ENCODE measurements at regions of chr1 and their contacts with region 1.

Region 1: DNA sequence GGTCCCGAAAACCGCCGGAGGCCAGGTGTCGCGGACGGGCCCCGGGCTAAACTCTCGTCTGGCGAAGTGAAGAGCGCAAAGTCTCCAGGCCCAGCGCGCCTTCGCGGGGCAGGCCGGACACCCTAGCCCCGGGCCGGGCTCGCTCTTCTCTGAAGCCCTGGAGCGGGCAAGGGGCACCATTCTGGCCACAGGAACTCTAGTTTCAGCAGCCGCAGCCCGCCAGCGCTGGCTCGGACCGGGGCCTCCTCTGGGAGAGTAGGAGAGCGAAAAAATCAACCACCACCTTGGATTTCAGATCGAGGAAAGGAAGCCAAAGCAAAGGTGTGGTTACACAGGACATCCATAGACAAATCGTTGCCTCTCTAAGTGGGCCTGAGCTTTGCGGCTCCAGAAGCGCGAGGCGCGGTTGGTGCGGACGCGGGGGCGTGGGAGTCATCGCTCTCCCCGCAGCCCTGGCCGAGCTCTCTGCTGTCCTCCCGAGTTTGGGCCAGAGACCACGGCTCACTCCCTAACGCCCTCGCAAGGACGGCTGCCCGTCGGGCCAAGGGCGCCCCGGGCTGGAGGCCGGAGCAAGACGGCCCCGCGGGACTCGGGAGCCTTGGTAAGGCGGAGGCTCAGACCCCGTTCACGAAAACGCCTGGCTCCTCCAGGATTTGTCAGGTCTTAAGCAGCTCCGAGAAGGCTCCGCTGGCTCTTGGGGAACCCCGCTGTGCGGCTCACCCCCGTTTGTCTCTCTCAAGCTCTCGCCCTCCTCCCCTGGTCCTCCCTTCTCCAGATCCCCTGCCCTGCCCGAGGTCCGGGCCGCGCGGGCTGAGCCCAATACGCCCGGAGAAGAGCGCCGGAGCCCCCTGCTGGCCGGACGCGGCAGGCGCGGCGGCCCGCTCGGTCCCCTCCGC is 132.9 kb upstream of the DPYD start:
- DNase-seq: peak; percentile 42 to 63 (median 50)
- H3K4me3 ChIP-seq: peak overlapping the region in 1 of 2 donors; percentile 49
- H3K4me3 Mint-ChIP-seq: peak overlapping the region; percentile 54 to 87 (median 72)
- H3K27ac ChIP-seq: no peak overlapping the region
- H3K27ac Mint-ChIP-seq: peak overlapping the region in 1 of 7 donors; percentile 71
- H3K4me1 ChIP-seq: peaks cover 22% of the 10 kb centered on the region
- H3K4me1 Mint-ChIP-seq: peaks cover 11 to 29% (median 22%) of the 10 kb centered on the region in 4 donors
- H3K27me3 ChIP-seq: peaks cover 40% of the 10 kb centered on the region
- H3K27me3 Mint-ChIP-seq: peaks cover 45 to 58% of the 10 kb centered on the region in 2 donors

Region 2: GRCh38 chr1:96236156-96236739 is 1817.5 kb before region 1 on chr1:
- CTCF ChIA-PET with region 1: no interaction called
- POLR2A ChIA-PET with region 1: no interaction called
- intact Hi-C with region 1: loop called (anchors 5 kb)
- DNase-seq: peak in 1 of 5 donors; percentile 1
- H3K4me3 ChIP-seq: no peak overlapping the region
- H3K4me3 Mint-ChIP-seq: no peak overlapping the region
- H3K27ac ChIP-seq: no peak overlapping the region
- H3K27ac Mint-ChIP-seq: no peak overlapping the region
- H3K4me1 ChIP-seq: no peaks in the 10 kb centered on the region
- H3K4me1 Mint-ChIP-seq: no peaks in the 10 kb centered on the region
- H3K27me3 ChIP-seq: no peaks in the 10 kb centered on the region
- H3K27me3 Mint-ChIP-seq: no peaks in the 10 kb centered on the region

Region 3: GRCh38 chr1:96966536-96967138 is 1087.1 kb before region 1 on chr1:
- CTCF ChIA-PET with region 1: interaction called, 74 read pairs
- POLR2A ChIA-PET with region 1: no interaction called
- intact Hi-C with region 1: loop called (anchors 1 kb)
- DNase-seq: peak; percentile 57 to 70 (median 64)
- H3K4me3 ChIP-seq: no peak overlapping the region
- H3K4me3 Mint-ChIP-seq: peak overlapping the region in 1 of 8 donors; percentile 31
- H3K27ac ChIP-seq: no peak overlapping the region
- H3K27ac Mint-ChIP-seq: no peak overlapping the region
- H3K4me1 ChIP-seq: no peaks in the 10 kb centered on the region
- H3K4me1 Mint-ChIP-seq: no peaks in the 10 kb centered on the region
- H3K27me3 ChIP-seq: no peaks in the 10 kb centered on the region
- H3K27me3 Mint-ChIP-seq: peaks cover 10 to 35% of the 10 kb centered on the region in 2 donors

Region 4: DNA sequence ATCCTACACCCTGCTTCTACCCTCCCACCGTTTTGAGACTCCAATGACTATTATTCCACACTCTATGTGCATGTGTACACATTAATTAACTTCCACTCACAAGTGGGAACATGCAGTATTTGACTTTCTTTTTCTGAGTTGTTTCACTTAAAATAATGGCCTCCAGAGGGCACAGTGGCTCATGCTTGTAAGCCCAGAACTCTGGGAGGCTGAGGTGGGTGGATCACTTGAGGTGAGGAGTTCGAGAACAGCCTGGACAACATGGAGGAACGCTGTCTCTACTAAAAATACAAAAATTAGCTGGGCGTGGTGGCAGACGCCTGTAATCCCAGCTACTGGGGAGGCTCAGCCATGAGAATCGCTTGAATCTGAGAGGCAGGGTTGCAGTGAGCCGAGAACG is 867.3 kb before region 1 on chr1:
- CTCF ChIA-PET with region 1: interaction called, 4 read pairs
- POLR2A ChIA-PET with region 1: no interaction called
- intact Hi-C with region 1: loop called (anchors 5 kb)
- DNase-seq: no peak
- H3K4me3 ChIP-seq: no peak overlapping the region
- H3K4me3 Mint-ChIP-seq: no peak overlapping the region
- H3K27ac ChIP-seq: no peak overlapping the region
- H3K27ac Mint-ChIP-seq: no peak overlapping the region
- H3K4me1 ChIP-seq: no peaks in the 10 kb centered on the region
- H3K4me1 Mint-ChIP-seq: no peaks in the 10 kb centered on the region
- H3K27me3 ChIP-seq: no peaks in the 10 kb centered on the region
- H3K27me3 Mint-ChIP-seq: no peaks in the 10 kb centered on the region

Region 5: GRCh38 chr1:97608272-97608671 is 445.4 kb before region 1 on chr1:
- CTCF ChIA-PET with region 1: no interaction called
- POLR2A ChIA-PET with region 1: no interaction called
- intact Hi-C with region 1: loop called (anchors 5 kb)
- DNase-seq: no peak
- H3K4me3 ChIP-seq: no peak overlapping the region
- H3K4me3 Mint-ChIP-seq: no peak overlapping the region
- H3K27ac ChIP-seq: no peak overlapping the region
- H3K27ac Mint-ChIP-seq: no peak overlapping the region
- H3K4me1 ChIP-seq: no peaks in the 10 kb centered on the region
- H3K4me1 Mint-ChIP-seq: peaks cover 0 to 10% (median 3%) of the 10 kb centered on the region in 4 donors
- H3K27me3 ChIP-seq: no peaks in the 10 kb centered on the region
- H3K27me3 Mint-ChIP-seq: no peaks in the 10 kb centered on the region

Region 6: DNA sequence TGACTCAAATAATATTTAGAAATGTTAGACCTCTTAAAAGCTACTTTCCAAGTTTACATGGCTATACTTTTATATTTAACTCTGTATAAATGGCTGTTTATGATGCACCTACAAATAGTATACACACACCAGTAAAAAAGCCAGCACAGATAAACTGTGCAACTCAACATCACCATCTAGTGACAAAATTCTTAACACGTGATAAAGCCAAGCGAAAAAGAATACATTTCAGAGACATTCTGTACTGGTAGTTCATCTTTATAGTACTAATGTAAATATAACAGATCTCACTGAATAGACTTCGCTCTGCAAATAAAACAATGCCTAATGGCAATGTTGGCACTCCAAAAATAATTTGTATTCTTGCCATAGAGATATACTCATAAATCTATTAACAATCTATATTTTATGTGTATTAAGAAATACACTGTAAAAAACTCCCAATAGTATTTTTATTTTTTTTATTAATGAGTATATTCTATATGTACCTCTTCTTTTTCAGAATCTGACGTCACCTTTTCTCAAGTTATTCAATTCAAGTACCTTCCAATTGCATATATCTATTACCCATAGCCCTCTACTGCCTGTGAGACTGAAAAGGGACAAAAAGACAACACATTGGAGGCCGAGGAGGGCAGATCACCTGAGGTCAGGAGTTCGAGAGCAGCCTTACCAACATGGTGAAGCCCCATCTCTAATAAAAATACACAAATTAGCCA is 233.1 kb before region 1 on chr1:
- CTCF ChIA-PET with region 1: interaction called, 3 read pairs
- POLR2A ChIA-PET with region 1: no interaction called
- intact Hi-C with region 1: loop called (anchors 5 kb)
- DNase-seq: peak in 2 of 5 donors; percentile 6 to 12
- H3K4me3 ChIP-seq: no peak overlapping the region
- H3K4me3 Mint-ChIP-seq: no peak overlapping the region
- H3K27ac ChIP-seq: no peak overlapping the region
- H3K27ac Mint-ChIP-seq: no peak overlapping the region
- H3K4me1 ChIP-seq: no peaks in the 10 kb centered on the region
- H3K4me1 Mint-ChIP-seq: peaks cover 0 to 3% (median under 1%) of the 10 kb centered on the region in 4 donors
- H3K27me3 ChIP-seq: no peaks in the 10 kb centered on the region
- H3K27me3 Mint-ChIP-seq: no peaks in the 10 kb centered on the region

Region 7: DNA sequence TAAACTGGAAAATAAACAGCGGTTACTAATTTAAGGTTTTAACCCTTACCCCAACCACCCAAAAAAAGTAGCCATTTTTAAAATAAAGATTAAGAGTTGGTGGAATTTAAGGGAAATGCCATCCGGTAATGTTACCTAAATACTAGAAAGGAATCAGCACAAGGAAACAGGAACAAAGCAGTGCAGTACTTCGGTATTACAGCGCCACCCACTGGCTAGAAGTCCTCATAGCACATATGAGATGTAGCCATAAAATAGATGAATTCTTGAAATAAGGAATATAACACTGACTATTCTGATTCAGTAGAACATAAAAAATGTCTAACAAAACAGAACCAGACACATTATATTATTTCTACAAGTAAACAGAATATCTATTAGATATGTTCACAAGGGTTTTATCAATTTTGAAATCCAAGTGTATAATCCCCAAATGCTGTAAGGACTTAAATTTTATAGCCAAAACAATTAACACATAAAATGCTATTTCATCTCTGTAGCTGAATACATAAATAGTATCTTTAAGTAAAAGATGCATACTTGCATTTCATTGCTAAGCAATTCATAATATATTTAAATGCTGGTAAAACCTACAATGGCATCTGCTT is 1653.9 kb after region 1 on chr1:
- CTCF ChIA-PET with region 1: no interaction called
- POLR2A ChIA-PET with region 1: no interaction called
- intact Hi-C with region 1: loop called (anchors 5 kb)
- DNase-seq: peak in 4 of 5 donors; percentile 31 to 43 (median 40)
- H3K4me3 ChIP-seq: no peak overlapping the region
- H3K4me3 Mint-ChIP-seq: no peak overlapping the region
- H3K27ac ChIP-seq: no peak overlapping the region
- H3K27ac Mint-ChIP-seq: no peak overlapping the region
- H3K4me1 ChIP-seq: peaks cover 21% of the 10 kb centered on the region
- H3K4me1 Mint-ChIP-seq: peaks cover 14 to 29% (median 15%) of the 10 kb centered on the region in 4 donors
- H3K27me3 ChIP-seq: no peaks in the 10 kb centered on the region
- H3K27me3 Mint-ChIP-seq: no peaks in the 10 kb centered on the region